Activated CD8-positive, alpha-beta memory T cell treated with anti-CD3 and anti-CD28 coated beads, Interleukin-2, amount 10 ng/mL, durations not matched to agents 7 days and 5 days (primary cell): ENCODE measurements at regions of chr14 and their contacts with region 1.

Region 1: GRCh38 chr14:106185837-106186233 is 659.5 kb downstream of the TMEM121 start:
- DNase-seq: peak; percentile 78
- ATAC-seq: peak; percentile 78
- H3K4me3 Mint-ChIP-seq: no peak overlapping the region
- H3K27ac Mint-ChIP-seq: peak overlapping the region; percentile 46
- H3K4me1 Mint-ChIP-seq: peaks cover 34% of the 10 kb centered on the region
- H3K27me3 Mint-ChIP-seq: peaks cover 62% of the 10 kb centered on the region

Region 2: GRCh38 chr14:106129274-106129673 is 56.6 kb before region 1 on chr14:
- CTCF ChIA-PET with region 1: no interaction called
- DNase-seq: no peak
- ATAC-seq: no peak
- H3K4me3 Mint-ChIP-seq: no peak overlapping the region
- H3K27ac Mint-ChIP-seq: no peak overlapping the region
- H3K4me1 Mint-ChIP-seq: peaks cover 15% of the 10 kb centered on the region
- H3K27me3 Mint-ChIP-seq: peaks cover 59% of the 10 kb centered on the region

Region 3: DNA sequence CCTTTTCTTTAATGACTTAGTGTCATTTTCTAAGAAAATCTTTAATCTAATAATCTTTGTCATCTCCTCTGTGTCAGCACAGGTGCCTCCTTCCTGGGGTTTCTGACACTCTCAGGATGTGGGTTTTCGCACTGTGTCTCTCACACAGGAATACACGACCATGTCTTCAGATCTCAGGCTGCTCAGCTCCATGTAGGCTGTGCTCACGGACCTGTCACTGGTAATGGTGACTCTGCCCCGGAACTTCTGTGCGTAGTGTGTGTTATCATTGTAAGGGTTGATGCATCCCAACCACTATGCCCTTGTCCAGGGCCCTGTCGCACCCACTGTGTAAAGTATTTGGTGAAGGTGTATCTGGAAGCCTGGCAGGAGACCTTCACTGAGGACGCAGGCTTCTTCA is 11.6 kb before region 1 on chr14:
- CTCF ChIA-PET with region 1: interaction called, 37 read pairs
- DNase-seq: peak; percentile 81
- ATAC-seq: peak; percentile 51
- H3K4me3 Mint-ChIP-seq: peak overlapping the region; percentile 11
- H3K27ac Mint-ChIP-seq: peak overlapping the region; percentile 63
- H3K4me1 Mint-ChIP-seq: peaks cover 52% of the 10 kb centered on the region
- H3K27me3 Mint-ChIP-seq: peaks cover 54% of the 10 kb centered on the region

Region 4: DNA sequence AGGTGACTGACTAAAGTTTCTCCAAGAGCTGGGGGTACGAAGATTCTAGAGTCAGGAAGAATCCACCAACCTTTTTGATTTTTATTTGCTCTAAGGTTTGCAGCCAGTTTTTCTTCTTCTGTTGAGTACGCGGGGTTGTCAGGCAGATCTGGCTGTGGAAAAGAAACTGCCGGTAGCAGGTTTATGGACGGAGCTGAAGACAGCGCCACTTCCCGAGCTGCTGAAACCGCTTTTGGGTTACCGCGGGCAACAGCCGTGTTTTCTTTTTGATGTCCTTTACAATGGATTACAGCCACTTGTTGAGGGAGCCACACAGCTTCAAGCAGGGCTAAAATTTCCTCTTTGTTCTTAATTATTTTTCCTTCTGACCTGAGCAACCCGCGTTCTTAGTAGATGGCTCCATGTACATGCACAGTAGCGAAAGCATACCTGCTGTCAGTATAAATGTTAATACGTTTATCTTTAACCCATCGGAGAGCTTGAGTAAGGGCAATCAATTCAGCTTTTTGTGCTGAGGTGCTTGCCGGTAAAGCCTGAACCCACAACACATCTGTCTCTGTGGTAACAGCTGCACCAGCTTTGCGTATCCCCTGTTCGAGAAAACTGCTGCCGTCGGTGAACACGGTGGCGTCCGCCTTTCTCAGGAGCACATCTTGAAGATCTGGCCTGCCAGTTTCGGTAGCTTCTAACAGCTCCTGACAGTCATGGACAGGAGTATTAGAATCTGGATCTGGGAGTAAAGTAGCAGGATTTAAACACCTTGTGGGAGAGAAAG is 14.9 kb after region 1 on chr14:
- CTCF ChIA-PET with region 1: interaction called, 10 read pairs
- DNase-seq: peak; percentile 52
- ATAC-seq: peak; percentile 71
- H3K4me3 Mint-ChIP-seq: peak overlapping the region; percentile 11
- H3K27ac Mint-ChIP-seq: no peak overlapping the region
- H3K4me1 Mint-ChIP-seq: peaks cover 10% of the 10 kb centered on the region
- H3K27me3 Mint-ChIP-seq: peaks cover 71% of the 10 kb centered on the region

Region 5: GRCh38 chr14:106248321-106249192 is 62.7 kb after region 1 on chr14:
- CTCF ChIA-PET with region 1: no interaction called
- DNase-seq: no peak
- ATAC-seq: no peak
- H3K4me3 Mint-ChIP-seq: no peak overlapping the region
- H3K27ac Mint-ChIP-seq: no peak overlapping the region
- H3K4me1 Mint-ChIP-seq: peaks cover 6% of the 10 kb centered on the region
- H3K27me3 Mint-ChIP-seq: peaks cover 68% of the 10 kb centered on the region